CD8-positive, alpha-beta T cell (primary cell): ENCODE measurements at regions of chr1 and their contacts with region 1.

Region 1: GRCh38 chr1:117059678-117060440 is at the start of gene TTF2:
- DNase-seq: peak; percentile 88 to 99 (median 93)
- ATAC-seq: peak; percentile 87
- H3K4me3 ChIP-seq: peak within 1 kb of the TSS; percentile 75
- H3K4me3 Mint-ChIP-seq: no peak within 1 kb of the TSS
- H3K27ac ChIP-seq: peak within 1 kb of the TSS; percentile 70 to 92
- H3K27ac Mint-ChIP-seq: no peak within 1 kb of the TSS
- H3K4me1 ChIP-seq: peaks cover 22% of the 10 kb centered on the region
- H3K4me1 Mint-ChIP-seq: peaks cover 39% of the 10 kb centered on the region
- H3K27me3 ChIP-seq: no peaks in the 10 kb centered on the region
- H3K27me3 Mint-ChIP-seq: no peaks in the 10 kb centered on the region
- CTCF ChIP-seq: no peak
- total RNA-seq, gene TTF2: 31.5 to 33.2 TPM

Region 2: DNA sequence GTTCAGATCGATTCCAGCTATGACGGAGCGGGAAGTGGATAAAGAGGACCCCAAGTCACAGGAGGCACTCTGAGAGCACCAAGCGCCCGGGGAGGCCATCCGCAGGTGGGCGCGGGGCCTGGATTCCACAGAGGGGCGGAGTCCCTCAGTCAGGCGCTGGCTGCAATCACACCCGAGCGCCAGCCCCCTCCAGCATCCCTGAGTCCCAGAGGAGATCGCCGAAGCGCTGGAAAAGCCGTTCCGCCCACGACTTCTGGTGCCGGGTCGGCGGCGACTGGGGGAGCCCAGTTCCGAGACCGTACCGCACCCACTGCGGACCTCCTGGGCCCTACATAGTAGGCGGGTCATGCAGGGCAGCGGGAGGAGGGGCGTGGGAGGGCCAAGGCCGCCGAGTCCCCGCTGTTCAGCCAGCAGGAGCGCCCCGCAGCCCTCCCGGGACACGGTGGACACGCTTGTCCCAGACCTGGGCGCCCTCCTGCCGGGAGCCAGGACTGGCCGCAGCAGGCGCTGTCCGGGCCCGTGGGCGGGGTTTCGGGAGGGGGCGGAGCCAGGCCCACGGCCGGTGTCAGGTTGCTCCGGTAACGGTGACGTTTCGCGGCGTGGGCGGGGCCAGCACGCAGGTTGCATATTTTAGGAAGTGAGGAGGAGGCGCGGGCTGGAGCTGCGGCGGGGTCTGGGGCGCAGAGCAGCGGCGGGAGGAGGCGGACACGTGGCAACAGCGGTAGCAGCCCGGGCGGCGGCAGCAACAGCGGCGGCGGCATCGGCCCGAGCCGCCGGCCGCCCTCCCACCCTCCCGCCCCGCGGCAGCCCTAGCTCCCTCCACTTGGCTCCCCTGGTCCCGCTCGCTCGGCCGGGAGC is 687.0 kb before region 1 on chr1 and contains the start of gene ATP1A1:
- CTCF ChIA-PET with region 1: no interaction called
- POLR2A ChIA-PET with region 1: no interaction called
- intact Hi-C with region 1: loop called (anchors 1 to 5 kb)
- DNase-seq: peak; percentile 93 to 99 (median 98)
- ATAC-seq: peak; percentile 66
- H3K4me3 ChIP-seq: peak within 1 kb of the TSS; percentile 73 to 80
- H3K4me3 Mint-ChIP-seq: peak within 1 kb of the TSS; percentile 96
- H3K27ac ChIP-seq: peak within 1 kb of the TSS; percentile 83 to 92
- H3K27ac Mint-ChIP-seq: peak within 1 kb of the TSS; percentile 97
- H3K4me1 ChIP-seq: peaks cover 35% of the 10 kb centered on the region
- H3K4me1 Mint-ChIP-seq: peaks cover 47% of the 10 kb centered on the region
- H3K27me3 ChIP-seq: no peaks in the 10 kb centered on the region
- H3K27me3 Mint-ChIP-seq: no peaks in the 10 kb centered on the region
- CTCF ChIP-seq: no peak
- total RNA-seq, gene ATP1A1: 204 to 211 TPM

Region 3: DNA sequence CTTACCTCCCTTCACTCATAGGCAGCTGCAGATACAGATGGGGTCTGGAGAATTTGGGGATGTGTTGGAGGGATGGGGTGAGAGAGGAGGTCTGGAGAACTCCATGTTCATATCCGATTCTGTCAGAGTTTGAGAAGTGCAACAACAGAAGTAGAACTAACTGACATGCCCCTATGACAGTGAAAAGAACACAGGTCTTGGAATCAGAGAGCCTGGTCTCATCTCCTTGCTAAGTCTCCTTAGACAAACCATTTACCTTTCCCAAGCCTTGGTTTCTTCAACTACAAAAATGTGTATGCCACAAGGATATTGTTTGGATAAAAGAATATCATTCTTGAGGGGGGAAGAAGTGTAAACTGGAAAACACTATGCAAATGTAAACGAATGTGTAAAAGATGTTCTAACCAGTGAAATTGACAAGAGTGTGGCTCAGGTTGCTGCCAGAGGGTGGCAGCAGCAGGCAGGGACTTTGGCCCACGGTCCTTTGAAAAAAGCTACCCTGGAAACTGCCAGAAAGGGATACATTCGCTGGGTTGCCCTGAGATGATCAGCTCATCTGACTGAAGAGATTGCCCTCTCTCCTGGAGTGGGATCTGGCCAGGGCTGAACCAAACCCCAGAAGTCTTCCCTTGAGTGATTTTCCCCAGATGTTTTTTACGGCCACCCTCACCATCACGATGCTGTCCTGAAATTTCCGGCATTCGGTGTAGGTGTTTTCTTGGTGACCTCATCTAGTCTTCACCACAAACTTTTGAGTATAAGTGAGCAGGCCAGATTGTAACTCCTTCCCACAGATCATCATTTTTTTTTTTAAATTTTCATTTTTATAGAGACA is 322.6 kb before region 1 on chr1:
- CTCF ChIA-PET with region 1: interaction called, 53 read pairs
- POLR2A ChIA-PET with region 1: interaction called, 14 read pairs
- intact Hi-C with region 1: loop called (anchors 1 kb)
- DNase-seq: peak; percentile 60 to 89 (median 75)
- ATAC-seq: peak; percentile 60
- H3K4me3 ChIP-seq: peak overlapping the region; percentile 23 to 25
- H3K4me3 Mint-ChIP-seq: peak overlapping the region; percentile 67
- H3K27ac ChIP-seq: peak overlapping the region; percentile 59 to 92
- H3K27ac Mint-ChIP-seq: peak overlapping the region; percentile 96
- H3K4me1 ChIP-seq: peaks cover 30% of the 10 kb centered on the region
- H3K4me1 Mint-ChIP-seq: peaks cover 44% of the 10 kb centered on the region
- H3K27me3 ChIP-seq: no peaks in the 10 kb centered on the region
- H3K27me3 Mint-ChIP-seq: no peaks in the 10 kb centered on the region
- CTCF ChIP-seq: peak; percentile 87

Region 4: GRCh38 chr1:116817582-116818064 is 242.2 kb before region 1 on chr1:
- CTCF ChIA-PET with region 1: interaction called, 26 read pairs
- POLR2A ChIA-PET with region 1: interaction called, 11 read pairs
- intact Hi-C with region 1: loop called (anchors 1 kb)
- DNase-seq: peak; percentile 43 to 89 (median 76)
- ATAC-seq: peak; percentile 71
- H3K4me3 ChIP-seq: no peak overlapping the region
- H3K4me3 Mint-ChIP-seq: peak overlapping the region; percentile 60
- H3K27ac ChIP-seq: no peak overlapping the region
- H3K27ac Mint-ChIP-seq: peak overlapping the region; percentile 70
- H3K4me1 ChIP-seq: peaks cover 19% of the 10 kb centered on the region
- H3K4me1 Mint-ChIP-seq: peaks cover 31% of the 10 kb centered on the region
- H3K27me3 ChIP-seq: no peaks in the 10 kb centered on the region
- H3K27me3 Mint-ChIP-seq: no peaks in the 10 kb centered on the region
- CTCF ChIP-seq: peak; percentile 80

Region 5: GRCh38 chr1:117009132-117009531 is 50.7 kb before region 1 on chr1:
- CTCF ChIA-PET with region 1: interaction called, 4 read pairs
- POLR2A ChIA-PET with region 1: interaction called, 6 read pairs
- intact Hi-C with region 1: loop called in 1 of 2 experiments (anchors 1 kb)
- DNase-seq: peak in 6 of 9 experiments; percentile 16 to 58 (median 38)
- ATAC-seq: peak; percentile 51
- H3K4me3 ChIP-seq: peak overlapping the region in 1 of 2 experiments; percentile 20
- H3K4me3 Mint-ChIP-seq: peak overlapping the region; percentile 64
- H3K27ac ChIP-seq: peak overlapping the region; percentile 9 to 50
- H3K27ac Mint-ChIP-seq: peak overlapping the region; percentile 92
- H3K4me1 ChIP-seq: peaks cover 53% of the 10 kb centered on the region
- H3K4me1 Mint-ChIP-seq: peaks cover 77% of the 10 kb centered on the region
- H3K27me3 ChIP-seq: no peaks in the 10 kb centered on the region
- H3K27me3 Mint-ChIP-seq: no peaks in the 10 kb centered on the region
- CTCF ChIP-seq: no peak

Region 6: GRCh38 chr1:117466761-117467160 is 406.9 kb after region 1 on chr1:
- CTCF ChIA-PET with region 1: no interaction called
- POLR2A ChIA-PET with region 1: no interaction called
- intact Hi-C with region 1: no loop called
- DNase-seq: no peak
- ATAC-seq: no peak
- H3K4me3 ChIP-seq: no peak overlapping the region
- H3K4me3 Mint-ChIP-seq: no peak overlapping the region
- H3K27ac ChIP-seq: no peak overlapping the region
- H3K27ac Mint-ChIP-seq: no peak overlapping the region
- H3K4me1 ChIP-seq: no peaks in the 10 kb centered on the region
- H3K4me1 Mint-ChIP-seq: no peaks in the 10 kb centered on the region
- H3K27me3 ChIP-seq: no peaks in the 10 kb centered on the region
- H3K27me3 Mint-ChIP-seq: no peaks in the 10 kb centered on the region
- CTCF ChIP-seq: no peak

Region 7: DNA sequence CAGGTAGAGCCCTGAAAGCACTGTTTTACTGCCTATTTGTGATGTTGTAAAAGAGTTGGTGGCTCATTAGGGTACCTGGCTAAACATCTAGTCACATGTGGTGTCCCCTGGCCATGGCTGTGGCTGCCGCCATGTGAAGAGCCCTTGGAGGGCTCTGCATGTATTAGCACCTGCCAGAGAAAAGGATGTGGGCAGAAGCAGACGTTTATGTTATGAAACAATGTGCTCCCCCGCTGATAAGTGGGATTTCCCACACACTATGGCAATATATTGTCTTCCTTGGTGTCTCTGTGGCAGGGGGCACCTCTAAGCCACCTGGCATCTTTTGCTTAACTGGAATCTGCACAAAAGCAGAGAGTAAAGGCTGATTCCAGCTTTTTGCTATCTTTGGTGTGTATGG is 555.6 kb after region 1 on chr1:
- CTCF ChIA-PET with region 1: no interaction called
- POLR2A ChIA-PET with region 1: no interaction called
- intact Hi-C with region 1: no loop called
- DNase-seq: peak in 8 of 9 experiments; percentile 13 to 86 (median 48)
- ATAC-seq: peak; percentile 73
- H3K4me3 ChIP-seq: no peak overlapping the region
- H3K4me3 Mint-ChIP-seq: peak overlapping the region; percentile 30
- H3K27ac ChIP-seq: no peak overlapping the region
- H3K27ac Mint-ChIP-seq: no peak overlapping the region
- H3K4me1 ChIP-seq: peaks cover 11% of the 10 kb centered on the region
- H3K4me1 Mint-ChIP-seq: peaks cover 62% of the 10 kb centered on the region
- H3K27me3 ChIP-seq: no peaks in the 10 kb centered on the region
- H3K27me3 Mint-ChIP-seq: peaks cover 15% of the 10 kb centered on the region
- CTCF ChIP-seq: no peak

Region 8: GRCh38 chr1:117674521-117675397 is 614.9 kb after region 1 on chr1:
- CTCF ChIA-PET with region 1: no interaction called
- POLR2A ChIA-PET with region 1: no interaction called
- intact Hi-C with region 1: loop called in 1 of 2 experiments (anchors 10 kb)
- DNase-seq: peak in 8 of 9 experiments; percentile 34 to 83 (median 67)
- ATAC-seq: peak; percentile 86
- H3K4me3 ChIP-seq: no peak overlapping the region
- H3K4me3 Mint-ChIP-seq: no peak overlapping the region
- H3K27ac ChIP-seq: no peak overlapping the region
- H3K27ac Mint-ChIP-seq: no peak overlapping the region
- H3K4me1 ChIP-seq: no peaks in the 10 kb centered on the region
- H3K4me1 Mint-ChIP-seq: peaks cover 6% of the 10 kb centered on the region
- H3K27me3 ChIP-seq: no peaks in the 10 kb centered on the region
- H3K27me3 Mint-ChIP-seq: peaks cover 14% of the 10 kb centered on the region
- CTCF ChIP-seq: peak; percentile 58